ENCODE measurements at regions of chr2 and their contacts with region 1.

Region 1: GRCh38 chr2:238847841-238848690 is at the start of gene TWIST2:
- DNase-seq: peak; percentile 60 to 80
- ATAC-seq: peak; percentile 73 to 79
- H3K4me3 ChIP-seq: peak within 1 kb of the TSS; percentile 94
- H3K27ac ChIP-seq: peak within 1 kb of the TSS; percentile 91 to 96
- H3K4me1 ChIP-seq: peaks cover 14% of the 10 kb centered on the region
- CTCF ChIP-seq: 0 out of 3 replicates have a peak, but pooled peaks have one; percentile 10
- EP300 ChIP-seq: no peak
- POLR2A ChIP-seq: peak; percentile 5
- RAD21 ChIP-seq: no peak
- polyA plus RNA-seq, gene TWIST2: 5.4 and 8.2 TPM in 2 replicates

Region 2: GRCh38 chr2:238864207-238865014 is 16.3 kb after region 1 on chr2:
- CTCF ChIA-PET with region 1: interaction called, 8 read pairs
- POLR2A ChIA-PET with region 1: interaction called, 10 read pairs
- DNase-seq: peak; percentile 96 to 98
- ATAC-seq: peak; percentile 90 to 97
- H3K4me3 ChIP-seq: peak overlapping the region; percentile 42
- H3K27ac ChIP-seq: peak overlapping the region; percentile 100
- H3K4me1 ChIP-seq: peaks cover 68% of the 10 kb centered on the region
- CTCF ChIP-seq: no peak
- EP300 ChIP-seq: peak; percentile 52 to 59; a peak in 2 of 5 replicates
- POLR2A ChIP-seq: peak; percentile 16; the same call in 1 of the 2 replicates
- RAD21 ChIP-seq: peak in 1 of 2 experiments; percentile 54; a peak in 3 of 5 replicates

Region 3: GRCh38 chr2:238970553-238971081 is 122.6 kb after region 1 on chr2:
- CTCF ChIA-PET with region 1: interaction called, 14 read pairs
- POLR2A ChIA-PET with region 1: no interaction called
- DNase-seq: peak; percentile 62 to 67
- ATAC-seq: peak; percentile 74 to 89
- H3K4me3 ChIP-seq: no peak overlapping the region
- H3K27ac ChIP-seq: peak overlapping the region; percentile 19 to 65; a peak in 1 of 6 replicates
- H3K4me1 ChIP-seq: peaks cover 24% of the 10 kb centered on the region
- CTCF ChIP-seq: peak; percentile 90
- EP300 ChIP-seq: no peak
- POLR2A ChIP-seq: no peak
- RAD21 ChIP-seq: peak; percentile 80